Activated naive CD8-positive, alpha-beta T cell treated with anti-CD3 and anti-CD28 coated beads, Interleukin-2, amount 10 ng/mL, durations not matched to agents 7 days and 5 days (primary cell): ENCODE measurements at regions of chr14 and their contacts with region 1.

Region 1: GRCh38 chr14:23034483-23035302 is at the start of gene PSMB5:
- DNase-seq: peak; percentile 79
- ATAC-seq: peak; percentile 95
- H3K4me3 Mint-ChIP-seq: peak within 1 kb of the TSS; percentile 84
- H3K27ac Mint-ChIP-seq: peak within 1 kb of the TSS; percentile 99
- H3K4me1 Mint-ChIP-seq: peaks cover 21% of the 10 kb centered on the region
- H3K27me3 Mint-ChIP-seq: no peaks in the 10 kb centered on the region
- total RNA-seq, gene PSMB5: 49.0 to 54.5 TPM

Region 2: GRCh38 chr14:22898372-22899090 is 136.2 kb before region 1 on chr14:
- POLR2A ChIA-PET with region 1: no interaction called
- DNase-seq: no peak
- ATAC-seq: no peak
- H3K4me3 Mint-ChIP-seq: no peak overlapping the region
- H3K27ac Mint-ChIP-seq: no peak overlapping the region
- H3K4me1 Mint-ChIP-seq: peaks cover 15% of the 10 kb centered on the region
- H3K27me3 Mint-ChIP-seq: no peaks in the 10 kb centered on the region

Region 3: DNA sequence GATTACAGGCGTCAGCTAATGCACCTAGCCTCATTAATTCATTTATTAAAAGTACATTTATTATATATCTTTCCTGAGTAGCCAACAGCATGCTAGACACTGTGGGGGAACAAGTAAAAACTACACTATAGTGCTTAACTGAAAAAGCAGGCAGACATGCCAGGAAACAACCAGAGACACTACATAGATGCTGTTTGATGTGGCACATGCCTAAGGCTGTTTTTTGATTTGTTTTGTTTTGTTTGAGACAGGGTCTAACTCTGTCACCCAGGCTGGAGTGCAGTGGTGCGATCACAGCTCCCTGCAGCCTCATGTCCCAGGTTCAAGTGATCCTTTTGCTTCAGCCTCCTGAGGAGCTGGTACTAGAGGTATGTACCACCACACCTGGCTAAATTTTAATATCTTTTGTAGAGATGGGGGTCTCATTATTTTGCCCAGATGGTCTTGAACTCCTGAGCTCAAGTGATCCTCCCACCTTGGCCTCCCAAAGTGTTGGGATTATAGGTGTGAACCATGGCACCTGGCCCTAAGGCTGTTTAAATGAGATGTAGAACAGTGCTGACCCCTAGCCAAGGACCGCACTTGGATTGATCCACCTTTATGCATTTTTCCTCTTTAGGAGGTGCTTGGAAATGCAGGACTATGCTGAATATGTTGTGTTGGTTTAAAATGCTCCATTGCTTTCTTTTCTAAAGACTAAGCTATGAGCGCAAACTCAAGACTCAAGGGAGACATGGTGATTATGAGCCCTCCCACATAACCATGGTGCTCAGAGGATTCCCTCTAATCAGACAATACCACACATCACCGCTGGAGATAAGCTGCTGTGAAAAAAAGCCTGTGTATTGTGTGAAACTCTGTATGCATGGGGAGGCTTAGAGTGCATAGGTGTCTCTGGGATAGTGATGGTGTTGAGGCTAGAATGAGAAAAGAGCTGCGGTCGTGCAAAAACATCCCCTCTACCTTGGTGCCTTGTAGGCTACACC is 14.3 kb before region 1 on chr14:
- POLR2A ChIA-PET with region 1: interaction called, 10 read pairs
- DNase-seq: no peak
- ATAC-seq: no peak
- H3K4me3 Mint-ChIP-seq: no peak overlapping the region
- H3K27ac Mint-ChIP-seq: no peak overlapping the region
- H3K4me1 Mint-ChIP-seq: peaks cover 14% of the 10 kb centered on the region
- H3K27me3 Mint-ChIP-seq: no peaks in the 10 kb centered on the region

Region 4: GRCh38 chr14:23068476-23069412 is 34.1 kb after region 1 on chr14:
- POLR2A ChIA-PET with region 1: no interaction called
- DNase-seq: no peak
- ATAC-seq: peak; percentile 71
- H3K4me3 Mint-ChIP-seq: peak overlapping the region; percentile 41
- H3K27ac Mint-ChIP-seq: peak overlapping the region; percentile 31
- H3K4me1 Mint-ChIP-seq: peaks cover 13% of the 10 kb centered on the region
- H3K27me3 Mint-ChIP-seq: no peaks in the 10 kb centered on the region